AG04450 (cell line): ENCODE measurements at regions of chr12 and their contacts with region 1.

Region 1: DNA sequence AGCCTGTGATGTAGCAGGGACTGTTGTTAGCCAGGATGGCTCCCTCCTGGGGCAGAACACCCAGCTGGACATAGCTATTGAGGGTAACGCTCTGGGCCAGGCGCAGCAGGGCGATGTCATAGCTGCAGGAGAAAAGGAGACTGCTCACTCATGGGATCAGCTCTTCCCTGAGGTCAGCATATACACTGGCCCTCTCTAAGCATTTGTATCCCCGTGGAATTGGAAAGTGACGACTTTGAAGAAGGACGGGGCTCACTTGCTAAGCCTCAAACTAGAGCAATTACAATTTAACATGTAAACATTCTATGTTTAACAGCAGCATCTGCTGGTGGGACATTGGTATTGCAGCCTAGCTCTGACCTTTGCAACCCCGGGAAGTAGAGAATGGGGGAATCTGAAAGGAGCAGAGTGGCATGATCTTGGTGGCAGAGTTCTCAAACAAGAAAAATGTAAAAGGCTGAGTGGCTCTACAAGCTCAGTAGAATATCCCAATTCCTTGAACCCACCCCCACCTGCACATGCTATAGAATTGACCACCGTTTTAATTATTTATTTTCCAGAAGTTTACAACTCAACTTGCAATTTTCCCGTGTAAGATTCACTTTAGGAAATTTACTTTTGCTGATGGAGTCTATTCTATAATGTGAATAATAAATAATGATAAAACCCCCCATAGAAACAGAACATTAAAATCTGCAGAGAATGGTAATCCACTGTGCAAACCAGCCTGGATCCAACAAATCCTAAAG is 5.0 kb downstream of the CELA1 start:
- DNase-seq: peak; percentile 26
- H3K4me3 ChIP-seq: peak overlapping the region; percentile 10
- H3K27ac ChIP-seq: no peak overlapping the region
- H3K27me3 ChIP-seq: no peaks in the 10 kb centered on the region
- CTCF ChIP-seq: peak; percentile 100

Region 2: DNA sequence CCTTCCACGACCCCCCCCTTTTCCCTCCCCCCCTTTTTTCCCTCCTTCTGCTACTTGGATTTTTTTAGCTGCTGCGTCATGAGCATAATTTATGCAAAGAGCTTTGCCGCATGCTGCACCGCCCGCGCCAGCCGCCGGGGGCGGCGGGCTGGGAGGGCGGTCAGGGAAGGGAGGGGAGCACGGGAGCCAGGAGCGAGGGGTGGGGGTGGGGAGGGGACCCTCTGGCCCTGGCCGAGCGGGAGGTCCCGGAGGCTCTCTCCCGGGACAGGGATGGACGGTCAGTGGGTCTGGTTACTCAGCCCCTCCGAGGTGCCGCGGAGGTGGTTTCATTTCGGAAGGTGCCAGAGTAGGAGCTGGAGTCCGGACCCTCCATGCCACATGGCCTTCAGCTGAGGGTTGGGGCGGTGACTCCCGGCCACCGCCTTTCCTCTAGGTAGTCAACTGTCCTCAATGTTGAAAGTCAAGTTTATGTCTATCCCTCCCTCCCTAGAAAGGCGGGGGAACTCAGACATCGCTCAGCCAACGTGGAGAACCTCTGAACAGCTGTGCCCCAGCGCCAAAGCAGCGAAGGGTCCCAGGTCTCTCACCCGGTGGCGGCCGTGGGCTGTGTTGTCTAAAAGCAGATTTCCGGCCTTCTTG is 123.3 kb before region 1 on chr12 and contains the start of gene POU6F1:
- CTCF ChIA-PET with region 1: interaction called, 14 read pairs
- POLR2A ChIA-PET with region 1: interaction called, 5 read pairs
- DNase-seq: peak; percentile 23
- H3K4me3 ChIP-seq: peak within 1 kb of the TSS; percentile 76
- H3K27ac ChIP-seq: peak within 1 kb of the TSS; percentile 75
- H3K27me3 ChIP-seq: no peaks in the 10 kb centered on the region
- CTCF ChIP-seq: peak; percentile 62
- polyA plus RNA-seq, gene POU6F1: 3.1 and 4.2 TPM in 2 replicates

Region 3: GRCh38 chr12:51262758-51263177 is 78.7 kb before region 1 on chr12:
- CTCF ChIA-PET with region 1: interaction called, 10 read pairs
- POLR2A ChIA-PET with region 1: no interaction called
- DNase-seq: no peak
- H3K4me3 ChIP-seq: no peak overlapping the region
- H3K27ac ChIP-seq: no peak overlapping the region
- H3K27me3 ChIP-seq: no peaks in the 10 kb centered on the region
- CTCF ChIP-seq: peak; percentile 28; the same call in 1 of the 2 replicates

Region 4: DNA sequence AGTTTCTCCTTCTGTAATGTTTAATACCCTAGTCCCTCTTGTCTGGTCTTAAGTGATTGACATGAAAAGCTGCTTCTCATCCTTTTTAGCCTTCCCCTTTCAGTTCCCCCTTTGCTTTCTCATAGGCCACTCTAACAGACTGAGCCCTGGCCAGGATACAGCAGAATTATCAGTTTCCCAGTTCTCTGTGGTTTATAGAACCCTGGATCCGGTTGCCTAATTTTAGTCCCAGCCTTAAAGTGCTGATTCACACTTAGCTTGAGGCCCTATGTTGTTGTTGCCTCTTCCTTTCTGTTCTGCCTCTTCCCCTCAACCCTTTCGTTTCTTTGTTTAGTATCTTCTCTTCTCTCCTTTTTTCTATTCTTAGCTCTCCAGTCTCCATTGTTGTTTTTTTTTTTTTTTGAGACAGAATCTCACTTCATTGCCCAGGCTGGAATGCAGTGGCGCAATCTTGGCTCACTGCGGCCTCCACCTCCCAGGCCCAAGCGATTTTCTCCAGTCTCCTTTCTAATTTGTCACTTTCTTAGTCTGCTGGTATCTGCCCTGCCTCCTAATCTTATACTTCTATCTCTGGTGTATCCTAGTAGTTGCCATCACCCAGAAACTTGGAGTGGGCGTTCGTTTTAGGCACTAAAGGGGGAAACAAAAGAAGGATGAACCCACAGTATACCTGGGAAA is 14.5 kb before region 1 on chr12:
- CTCF ChIA-PET with region 1: interaction called, 31 read pairs
- POLR2A ChIA-PET with region 1: no interaction called
- DNase-seq: no peak
- H3K4me3 ChIP-seq: no peak overlapping the region
- H3K27ac ChIP-seq: peak overlapping the region; percentile 34
- H3K27me3 ChIP-seq: no peaks in the 10 kb centered on the region
- CTCF ChIP-seq: no peak